Activated CD4-positive, alpha-beta memory T cell treated with anti-CD3 and anti-CD28 coated beads for 36 hours (primary cell): ENCODE measurements at regions of chr7 and their contacts with region 1.

Region 1: GRCh38 chr7:77351539-77352004 is 64.6 kb downstream of the GSAP start:
- DNase-seq: peak; percentile 57
- H3K4me3 Mint-ChIP-seq: peak overlapping the region; percentile 53
- H3K27ac Mint-ChIP-seq: peak overlapping the region; percentile 71
- H3K4me1 Mint-ChIP-seq: peaks cover 49% of the 10 kb centered on the region
- H3K27me3 Mint-ChIP-seq: no peaks in the 10 kb centered on the region

Region 2: DNA sequence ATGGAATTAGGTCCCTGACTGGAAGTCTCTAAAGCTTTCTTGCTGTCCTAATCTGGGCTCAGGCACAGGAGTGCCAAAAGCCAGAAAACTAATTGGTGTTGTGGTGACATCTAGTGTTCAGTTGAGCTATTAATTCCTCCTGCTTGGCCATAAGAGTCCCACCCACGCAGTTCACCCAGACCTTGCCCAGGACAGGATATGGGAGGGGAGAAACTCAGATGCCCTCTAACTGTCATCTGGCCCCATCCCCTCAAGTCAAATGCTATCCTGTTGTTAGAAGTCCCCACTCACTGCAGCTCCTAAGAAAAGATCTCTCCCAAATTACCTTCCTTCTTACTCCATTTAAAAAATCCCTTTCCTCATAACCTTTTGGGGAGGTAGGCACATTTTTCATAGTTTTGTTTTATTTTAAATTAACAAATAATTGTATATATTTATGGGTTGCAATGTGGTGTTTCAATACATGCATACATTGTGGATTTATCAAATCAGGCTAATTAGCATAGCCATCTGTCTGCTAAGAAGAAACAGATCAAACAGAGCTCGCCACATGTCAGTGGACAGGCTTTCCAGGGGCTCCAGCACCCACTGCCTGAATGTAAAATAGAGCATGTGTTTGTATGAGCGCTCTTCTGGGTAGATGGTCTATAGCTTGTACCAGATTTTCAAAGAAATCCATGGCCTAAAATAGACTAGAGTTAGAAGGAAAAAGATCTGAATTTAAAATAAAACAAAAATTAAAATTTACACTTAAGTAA is 19.5 kb before region 1 on chr7:
- CTCF ChIA-PET with region 1: interaction called, 5 read pairs
- POLR2A ChIA-PET with region 1: no interaction called
- intact Hi-C with region 1: loop called (anchors 1 kb)
- DNase-seq: peak; percentile 69
- H3K4me3 Mint-ChIP-seq: no peak overlapping the region
- H3K27ac Mint-ChIP-seq: no peak overlapping the region
- H3K4me1 Mint-ChIP-seq: peaks cover 45% of the 10 kb centered on the region
- H3K27me3 Mint-ChIP-seq: no peaks in the 10 kb centered on the region

Region 3: GRCh38 chr7:77386165-77386822 is 34.7 kb after region 1 on chr7:
- CTCF ChIA-PET with region 1: no interaction called
- POLR2A ChIA-PET with region 1: no interaction called
- intact Hi-C with region 1: no loop called
- DNase-seq: no peak
- H3K4me3 Mint-ChIP-seq: no peak overlapping the region
- H3K27ac Mint-ChIP-seq: no peak overlapping the region
- H3K4me1 Mint-ChIP-seq: peaks cover 17% of the 10 kb centered on the region
- H3K27me3 Mint-ChIP-seq: no peaks in the 10 kb centered on the region